HepG2 (cell line): ENCODE measurements at regions of chr3 and their contacts with region 1.

Region 1: GRCh38 chr3:10224784-10225665 is 23.2 kb upstream of the TATDN2 start:
- DNase-seq: peak; percentile 99
- ATAC-seq: peak; percentile 96
- H3K4me3 ChIP-seq: no peak overlapping the region
- H3K27ac ChIP-seq: peak overlapping the region; percentile 61
- H3K4me1 ChIP-seq: peaks cover 50% of the 10 kb centered on the region
- H3K27me3 ChIP-seq: no peaks in the 10 kb centered on the region
- CTCF ChIP-seq: peak; percentile 96
- EP300 ChIP-seq: peak in 1 of 2 experiments; percentile 94; a peak in 3 of 4 replicates
- POLR2A ChIP-seq: no peak
- RAD21 ChIP-seq: peak; percentile 97

Region 2: GRCh38 chr3:9843715-9844438 is 381.1 kb before region 1 on chr3 and contains the start of gene RPUSD3:
- CTCF ChIA-PET with region 1: no interaction called
- POLR2A ChIA-PET with region 1: no interaction called
- in situ Hi-C with region 1: no loop called
- intact Hi-C with region 1: loop called (anchors 5 kb)
- DNase-seq: peak; percentile 82
- ATAC-seq: peak; percentile 98
- H3K4me3 ChIP-seq: peak within 1 kb of the TSS; percentile 74 to 94 (median 87)
- H3K27ac ChIP-seq: peak within 1 kb of the TSS; percentile 56
- H3K4me1 ChIP-seq: peaks cover 22% of the 10 kb centered on the region
- H3K27me3 ChIP-seq: no peaks in the 10 kb centered on the region; a peak in 1 of 5 replicates
- CTCF ChIP-seq: 0 out of 2 replicates have a peak, but pooled peaks have one; percentile 3
- EP300 ChIP-seq: no peak
- POLR2A ChIP-seq: peak in 1 of 2 experiments; percentile 86; a peak in 3 of 4 replicates
- RAD21 ChIP-seq: no peak
- total RNA-seq, gene RPUSD3: 30.3 and 32.1 TPM in 2 replicates

Region 3: GRCh38 chr3:9897408-9898372 is 327.3 kb before region 1 on chr3:
- CTCF ChIA-PET with region 1: no interaction called
- POLR2A ChIA-PET with region 1: no interaction called
- in situ Hi-C with region 1: no loop called
- intact Hi-C with region 1: no loop called
- DNase-seq: peak; percentile 98
- ATAC-seq: peak; percentile 80
- H3K4me3 ChIP-seq: peak overlapping the region in 2 of 3 experiments; percentile 34 to 67; a peak in 3 of 6 replicates
- H3K27ac ChIP-seq: peak overlapping the region; percentile 100
- H3K4me1 ChIP-seq: peaks cover 79% of the 10 kb centered on the region
- H3K27me3 ChIP-seq: no peaks in the 10 kb centered on the region; a peak in 1 of 5 replicates
- CTCF ChIP-seq: no peak
- EP300 ChIP-seq: peak in 1 of 2 experiments; percentile 48; a peak in 3 of 4 replicates
- POLR2A ChIP-seq: peak; percentile 66 to 88
- RAD21 ChIP-seq: no peak

Region 4: GRCh38 chr3:10115326-10116137 is 109.5 kb before region 1 on chr3 and contains the start of gene BRK1:
- CTCF ChIA-PET with region 1: no interaction called
- POLR2A ChIA-PET with region 1: no interaction called
- in situ Hi-C with region 1: no loop called
- intact Hi-C with region 1: loop called (anchors 1 kb)
- DNase-seq: peak; percentile 94
- ATAC-seq: peak; percentile 97
- H3K4me3 ChIP-seq: peak within 1 kb of the TSS; percentile 76 to 96 (median 92)
- H3K27ac ChIP-seq: peak within 1 kb of the TSS; percentile 65
- H3K4me1 ChIP-seq: peaks cover 33% of the 10 kb centered on the region
- H3K27me3 ChIP-seq: no peaks in the 10 kb centered on the region; a peak in 1 of 5 replicates
- CTCF ChIP-seq: no peak
- EP300 ChIP-seq: no peak
- POLR2A ChIP-seq: peak; percentile 95 to 97
- RAD21 ChIP-seq: no peak
- total RNA-seq, gene BRK1: 118 and 146 TPM in 2 replicates

Region 5: GRCh38 chr3:10164546-10165393 is 60.3 kb before region 1 on chr3 and contains the start of gene IRAK2:
- CTCF ChIA-PET with region 1: interaction called, 8 read pairs
- POLR2A ChIA-PET with region 1: interaction called, 5 read pairs
- in situ Hi-C with region 1: loop called (anchors 10 kb)
- intact Hi-C with region 1: loop called (anchors 1 kb)
- DNase-seq: peak; percentile 35
- ATAC-seq: peak; percentile 87
- H3K4me3 ChIP-seq: peak within 1 kb of the TSS; percentile 85 to 95 (median 88)
- H3K27ac ChIP-seq: peak within 1 kb of the TSS; percentile 76
- H3K4me1 ChIP-seq: peaks cover 70% of the 10 kb centered on the region
- H3K27me3 ChIP-seq: no peaks in the 10 kb centered on the region; a peak in 1 of 5 replicates
- CTCF ChIP-seq: peak; percentile 72
- EP300 ChIP-seq: peak in 1 of 2 experiments; percentile 18; a peak in 1 of 4 replicates
- POLR2A ChIP-seq: peak; percentile 78 to 91
- RAD21 ChIP-seq: no peak; the same call in 1 of the 2 replicates
- total RNA-seq, gene IRAK2: 13.1 and 15.3 TPM in 2 replicates

Region 6: GRCh38 chr3:10192953-10193691 is 31.9 kb before region 1 on chr3:
- CTCF ChIA-PET with region 1: interaction called, 6 read pairs
- POLR2A ChIA-PET with region 1: interaction called, 23 read pairs
- in situ Hi-C with region 1: no loop called
- intact Hi-C with region 1: loop called (anchors 2 kb)
- DNase-seq: peak; percentile 28
- ATAC-seq: peak; percentile 39
- H3K4me3 ChIP-seq: no peak overlapping the region
- H3K27ac ChIP-seq: peak overlapping the region; percentile 65
- H3K4me1 ChIP-seq: peaks cover 60% of the 10 kb centered on the region
- H3K27me3 ChIP-seq: no peaks in the 10 kb centered on the region
- CTCF ChIP-seq: 0 out of 2 replicates have a peak, but pooled peaks have one; percentile 11
- EP300 ChIP-seq: no peak
- POLR2A ChIP-seq: no peak
- RAD21 ChIP-seq: no peak

Region 7: GRCh38 chr3:10205451-10206165 is 19.4 kb before region 1 on chr3:
- CTCF ChIA-PET with region 1: no interaction called
- POLR2A ChIA-PET with region 1: interaction called, 38 read pairs
- in situ Hi-C with region 1: no loop called
- intact Hi-C with region 1: loop called (anchors 2 kb)
- DNase-seq: no peak
- ATAC-seq: no peak
- H3K4me3 ChIP-seq: no peak overlapping the region
- H3K27ac ChIP-seq: peak overlapping the region; percentile 93
- H3K4me1 ChIP-seq: peaks cover 60% of the 10 kb centered on the region
- H3K27me3 ChIP-seq: no peaks in the 10 kb centered on the region
- CTCF ChIP-seq: no peak
- EP300 ChIP-seq: no peak
- POLR2A ChIP-seq: no peak
- RAD21 ChIP-seq: no peak

Region 8: DNA sequence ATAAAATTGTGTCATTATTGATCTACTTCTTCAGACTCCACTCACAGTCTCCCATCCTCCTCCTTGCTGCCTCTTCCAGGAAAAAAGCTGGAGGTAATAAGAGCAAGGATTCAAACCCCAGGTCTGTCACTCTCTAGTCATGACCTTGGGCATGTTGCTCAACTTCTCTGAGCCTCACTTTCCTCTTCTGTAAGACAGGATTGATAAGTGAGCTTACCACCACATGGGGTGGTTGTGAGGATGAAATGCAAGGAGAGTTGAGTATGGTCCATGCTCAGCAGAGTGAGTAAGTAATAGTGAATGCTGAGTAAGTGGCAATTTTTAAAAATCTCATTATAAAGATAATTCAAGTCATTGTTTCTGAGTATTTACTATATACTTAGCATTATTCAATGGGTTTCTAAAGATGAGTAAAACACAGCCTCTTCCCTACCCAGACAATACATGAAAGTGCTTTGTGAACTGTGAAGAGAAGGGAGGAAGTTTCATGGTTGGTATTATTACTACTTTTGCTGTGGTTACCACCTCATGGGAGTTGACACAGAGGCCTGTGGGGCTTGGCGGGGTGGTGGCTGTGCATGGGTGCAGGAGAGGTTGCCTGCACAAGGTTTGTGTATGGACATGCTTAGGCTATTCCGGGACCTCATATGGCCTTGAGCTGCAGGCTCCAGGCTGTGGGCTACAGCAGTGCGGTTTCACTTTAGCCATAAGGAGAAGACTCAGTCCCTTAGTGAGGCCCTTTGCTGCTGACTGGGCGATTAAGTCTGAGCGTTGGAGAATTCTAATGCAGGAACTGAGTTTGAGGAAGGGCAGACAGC is 621.0 kb after region 1 on chr3:
- CTCF ChIA-PET with region 1: no interaction called
- POLR2A ChIA-PET with region 1: no interaction called
- in situ Hi-C with region 1: no loop called
- intact Hi-C with region 1: no loop called
- DNase-seq: no peak
- ATAC-seq: peak; percentile 35; the same call in 2 of the 3 replicates
- H3K4me3 ChIP-seq: no peak overlapping the region
- H3K27ac ChIP-seq: no peak overlapping the region
- H3K4me1 ChIP-seq: no peaks in the 10 kb centered on the region
- H3K27me3 ChIP-seq: peaks cover 0 to 1% of the 10 kb centered on the region in 2 experiments; a peak in 1 of 5 replicates
- CTCF ChIP-seq: no peak
- EP300 ChIP-seq: no peak
- POLR2A ChIP-seq: no peak
- RAD21 ChIP-seq: no peak